HEK293 (cell line): ENCODE measurements at regions of chr1 and their contacts with region 1.

Region 1: GRCh38 chr1:212994926-212995325 is 20.7 kb downstream of the ANGEL2 start:
- H3K4me3 ChIP-seq: no peak overlapping the region
- H3K27ac ChIP-seq: no peak overlapping the region
- H3K4me1 ChIP-seq: no peaks in the 10 kb centered on the region
- CTCF ChIP-seq: no peak

Region 2: GRCh38 chr1:212477014-212477679 is 517.8 kb before region 1 on chr1:
- CTCF ChIA-PET with region 1: interaction called, 12 read pairs
- POLR2A ChIA-PET with region 1: no interaction called
- H3K4me3 ChIP-seq: no peak overlapping the region
- H3K27ac ChIP-seq: no peak overlapping the region
- H3K4me1 ChIP-seq: no peaks in the 10 kb centered on the region
- CTCF ChIP-seq: peak; percentile 73

Region 3: GRCh38 chr1:212814537-212815334 is 180.2 kb before region 1 on chr1:
- CTCF ChIA-PET with region 1: interaction called, 11 read pairs
- POLR2A ChIA-PET with region 1: no interaction called
- H3K4me3 ChIP-seq: no peak overlapping the region
- H3K27ac ChIP-seq: no peak overlapping the region
- H3K4me1 ChIP-seq: no peaks in the 10 kb centered on the region
- CTCF ChIP-seq: no peak

Region 4: GRCh38 chr1:212879947-212880690 is 114.8 kb before region 1 on chr1:
- CTCF ChIA-PET with region 1: no interaction called
- POLR2A ChIA-PET with region 1: no interaction called
- H3K4me3 ChIP-seq: no peak overlapping the region
- H3K27ac ChIP-seq: no peak overlapping the region
- H3K4me1 ChIP-seq: no peaks in the 10 kb centered on the region
- CTCF ChIP-seq: no peak

Region 5: DNA sequence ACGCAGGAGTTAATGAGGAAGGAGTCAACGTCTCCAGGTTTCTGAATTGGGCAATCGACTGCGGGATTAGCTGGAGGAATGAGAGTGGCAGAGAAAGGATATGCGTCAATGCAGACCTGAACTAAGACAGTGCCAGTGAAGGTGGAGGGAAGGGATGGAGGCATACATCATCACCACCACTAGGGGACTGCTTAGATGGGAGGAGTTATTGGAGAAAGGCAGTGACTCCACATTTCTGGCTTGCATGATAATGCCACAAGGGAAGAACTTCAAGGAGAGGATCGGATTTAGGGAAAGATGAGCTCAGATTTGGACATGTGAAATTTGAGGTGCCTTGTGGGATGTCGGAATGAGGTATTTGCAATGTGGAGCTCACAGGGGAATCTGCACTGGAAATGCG is 27.1 kb before region 1 on chr1:
- CTCF ChIA-PET with region 1: interaction called, 13 read pairs
- POLR2A ChIA-PET with region 1: no interaction called
- H3K4me3 ChIP-seq: no peak overlapping the region
- H3K27ac ChIP-seq: no peak overlapping the region
- H3K4me1 ChIP-seq: no peaks in the 10 kb centered on the region
- CTCF ChIP-seq: peak; percentile 31; the same call in 1 of the 2 replicates

Region 6: DNA sequence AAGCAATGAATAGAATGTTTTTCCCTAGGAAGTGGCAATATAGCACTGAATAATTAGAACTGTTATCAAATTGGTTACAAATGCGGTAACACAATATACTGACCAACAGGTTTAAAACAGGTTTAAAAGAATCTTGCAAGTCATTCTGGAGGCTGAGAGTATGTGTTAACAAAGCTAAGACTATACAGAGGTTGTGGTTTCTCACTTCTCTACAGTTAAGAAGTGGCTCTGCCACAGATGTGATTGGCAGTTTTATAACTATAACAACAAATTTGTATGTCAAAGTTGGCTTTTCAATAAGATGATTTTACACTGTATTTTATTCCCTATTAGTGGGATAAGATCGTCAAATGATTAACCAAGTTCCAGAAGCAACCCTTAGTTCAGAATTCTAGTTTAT is 13.6 kb after region 1 on chr1:
- CTCF ChIA-PET with region 1: interaction called, 14 read pairs
- POLR2A ChIA-PET with region 1: no interaction called
- H3K4me3 ChIP-seq: no peak overlapping the region
- H3K27ac ChIP-seq: no peak overlapping the region
- H3K4me1 ChIP-seq: no peaks in the 10 kb centered on the region
- CTCF ChIP-seq: no peak